Naive thymus-derived CD4-positive, alpha-beta T cell (primary cell): ENCODE measurements at regions of chr12 and their contacts with region 1.

Region 1: DNA sequence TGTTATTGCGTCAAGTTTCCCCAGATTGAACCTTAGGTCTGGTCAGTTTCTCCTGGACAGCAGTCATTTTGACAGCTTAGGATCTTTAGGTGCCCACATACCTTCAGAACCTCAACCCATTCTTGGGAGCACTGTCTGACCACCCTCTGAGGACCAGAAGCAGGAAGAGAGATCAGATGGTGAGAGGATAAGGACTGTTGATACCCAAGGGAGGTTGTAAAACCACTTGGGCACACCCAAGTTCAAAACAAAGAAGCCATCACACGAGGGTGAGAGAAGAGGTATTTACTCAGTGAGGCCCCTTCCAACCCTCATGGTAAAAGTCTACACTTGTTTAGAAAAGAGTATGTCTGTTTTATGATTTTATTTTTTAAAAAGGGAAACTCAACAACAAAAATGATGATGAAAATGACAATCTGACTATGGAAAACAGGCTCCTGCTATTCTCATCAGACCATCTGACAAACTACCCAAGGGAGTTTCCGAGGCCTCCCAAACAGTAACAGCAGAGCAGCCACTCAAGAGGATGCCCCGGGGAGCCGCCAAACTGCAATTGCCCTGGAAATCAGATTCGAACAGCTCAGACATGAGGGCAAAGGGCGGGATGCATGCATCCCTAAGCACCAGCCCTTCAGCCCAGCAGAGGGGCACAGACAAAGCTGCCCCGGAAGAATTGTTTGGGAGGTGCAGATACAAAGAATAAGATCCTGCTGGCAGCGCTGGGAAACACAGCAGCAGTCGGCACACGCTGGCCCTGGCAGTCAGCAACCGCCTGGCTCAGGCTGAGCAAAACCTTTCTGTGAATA is 162.6 kb upstream of the PLEKHG7 start:
- DNase-seq: no peak
- ATAC-seq: peak; percentile 48
- H3K4me3 ChIP-seq: no peak overlapping the region
- H3K4me3 Mint-ChIP-seq: peak overlapping the region in 5 of 10 donors; percentile 14 to 69 (median 56)
- H3K27ac ChIP-seq: no peak overlapping the region
- H3K27ac Mint-ChIP-seq: peak overlapping the region in 5 of 9 donors; percentile 68 to 90 (median 71)
- H3K4me1 ChIP-seq: peaks cover 23 to 44% of the 10 kb centered on the region in 2 donors
- H3K4me1 Mint-ChIP-seq: peaks cover 21 to 72% (median 52%) of the 10 kb centered on the region in 7 donors
- H3K27me3 ChIP-seq: no peaks in the 10 kb centered on the region
- H3K27me3 Mint-ChIP-seq: no peaks in the 10 kb centered on the region

Region 2: GRCh38 chr12:92378682-92379479 is 161.3 kb before region 1 on chr12:
- CTCF ChIA-PET with region 1: no interaction called
- POLR2A ChIA-PET with region 1: no interaction called
- intact Hi-C with region 1: no loop called
- DNase-seq: peak in 7 of 9 donors; percentile 44 to 73 (median 65)
- ATAC-seq: peak; percentile 90
- H3K4me3 ChIP-seq: no peak overlapping the region
- H3K4me3 Mint-ChIP-seq: peak overlapping the region; percentile 8 to 74 (median 62)
- H3K27ac ChIP-seq: peak overlapping the region; percentile 64
- H3K27ac Mint-ChIP-seq: peak overlapping the region; percentile 87 to 96 (median 93)
- H3K4me1 ChIP-seq: peaks cover 8 to 52% of the 10 kb centered on the region in 2 donors
- H3K4me1 Mint-ChIP-seq: peaks cover 31 to 91% (median 87%) of the 10 kb centered on the region in 7 donors
- H3K27me3 ChIP-seq: no peaks in the 10 kb centered on the region
- H3K27me3 Mint-ChIP-seq: no peaks in the 10 kb centered on the region

Region 3: GRCh38 chr12:92551853-92552397 is 11.7 kb after region 1 on chr12:
- CTCF ChIA-PET with region 1: no interaction called
- POLR2A ChIA-PET with region 1: no interaction called
- intact Hi-C with region 1: loop called in 1 of 2 experiments (anchors 1 kb)
- DNase-seq: peak in 1 of 9 donors; percentile 51
- ATAC-seq: no peak
- H3K4me3 ChIP-seq: no peak overlapping the region
- H3K4me3 Mint-ChIP-seq: no peak overlapping the region
- H3K27ac ChIP-seq: no peak overlapping the region
- H3K27ac Mint-ChIP-seq: no peak overlapping the region
- H3K4me1 ChIP-seq: peaks cover 11 to 15% of the 10 kb centered on the region in 2 donors
- H3K4me1 Mint-ChIP-seq: peaks cover 21 to 32% (median 27%) of the 10 kb centered on the region in 7 donors
- H3K27me3 ChIP-seq: no peaks in the 10 kb centered on the region
- H3K27me3 Mint-ChIP-seq: no peaks in the 10 kb centered on the region